Left lung (tissue), 14 donors: ENCODE measurements at regions of chr1 and their contacts with region 1.

Region 1: DNA sequence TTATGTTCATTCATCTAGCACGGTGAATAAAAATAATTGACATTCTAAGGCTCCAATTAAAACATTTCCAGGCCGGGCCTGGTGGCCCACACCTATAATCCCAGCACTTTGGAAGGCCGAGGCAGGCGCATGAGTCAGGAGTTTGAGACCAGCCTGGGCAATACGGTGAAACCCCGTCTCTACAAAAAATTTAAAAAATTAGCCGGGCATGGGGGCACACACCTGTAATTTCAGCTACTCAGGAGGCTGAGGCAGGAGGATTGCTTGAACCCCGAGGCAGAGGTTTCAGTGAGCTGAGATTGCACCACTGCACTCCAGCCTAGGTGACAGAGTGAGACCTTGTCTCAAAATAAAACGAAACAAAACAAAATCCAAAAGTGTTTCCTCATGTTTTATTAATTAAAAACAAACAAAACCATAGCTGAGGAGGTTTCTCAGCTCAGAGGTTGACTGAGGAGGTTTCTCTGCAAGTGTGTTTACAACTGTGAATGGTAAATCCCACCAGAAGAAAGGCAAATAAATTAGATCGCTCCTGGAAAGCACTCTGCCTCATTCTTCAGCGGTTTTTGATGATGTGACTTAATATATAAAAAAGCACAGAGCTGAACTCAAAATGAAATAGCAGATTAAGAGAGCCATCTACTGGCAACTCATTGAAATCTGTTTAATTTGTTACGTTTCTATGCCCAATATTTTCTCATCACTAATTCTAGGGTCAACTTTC is 37.7 kb upstream of the ATG4C start:
- DNase-seq: peak in 2 of 4 donors; percentile 30 to 53
- ATAC-seq: peak; percentile 73
- H3K4me3 ChIP-seq: no peak overlapping the region
- H3K27ac ChIP-seq: no peak overlapping the region
- H3K4me1 ChIP-seq: no peaks in the 10 kb centered on the region
- H3K27me3 ChIP-seq: no peaks in the 10 kb centered on the region
- CTCF ChIP-seq: peak in 1 of 2 donors; percentile 39

Region 2: DNA sequence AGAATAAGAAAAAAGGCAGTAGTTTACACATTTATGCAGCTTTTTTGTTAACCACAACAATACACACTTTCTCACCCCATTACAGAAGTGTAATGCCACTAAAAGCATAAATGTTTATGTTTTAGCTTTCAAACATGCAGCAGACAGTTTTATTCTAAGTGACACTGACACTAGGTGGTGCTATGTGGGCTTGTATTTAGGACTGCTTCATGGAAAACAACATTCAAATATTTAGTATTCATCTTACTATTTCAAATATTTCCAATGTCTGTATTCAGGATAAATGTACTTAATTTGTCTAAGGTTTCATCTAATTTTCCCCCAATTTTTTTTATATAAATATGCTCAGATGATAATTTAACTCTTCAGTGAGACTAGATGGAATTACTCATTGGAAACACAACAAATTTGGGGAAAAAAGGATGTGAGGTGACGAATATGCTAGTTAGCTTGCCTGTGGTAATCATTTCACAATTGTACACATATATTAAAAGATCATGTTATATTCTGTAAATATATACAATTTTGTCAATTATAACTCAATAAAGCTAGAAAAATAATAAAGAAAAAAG is 238.0 kb before region 1 on chr1:
- intact Hi-C with region 1: loop called in 1 of 2 experiments (anchors 10 kb)
- DNase-seq: peak in 2 of 4 donors; percentile 34 to 57
- ATAC-seq: peak; percentile 64
- H3K4me3 ChIP-seq: no peak overlapping the region
- H3K27ac ChIP-seq: no peak overlapping the region
- H3K4me1 ChIP-seq: no peaks in the 10 kb centered on the region
- H3K27me3 ChIP-seq: no peaks in the 10 kb centered on the region
- CTCF ChIP-seq: peak in 1 of 2 donors; percentile 37